ENCODE measurements at regions of chr11 and their contacts with region 1.

Region 1: DNA sequence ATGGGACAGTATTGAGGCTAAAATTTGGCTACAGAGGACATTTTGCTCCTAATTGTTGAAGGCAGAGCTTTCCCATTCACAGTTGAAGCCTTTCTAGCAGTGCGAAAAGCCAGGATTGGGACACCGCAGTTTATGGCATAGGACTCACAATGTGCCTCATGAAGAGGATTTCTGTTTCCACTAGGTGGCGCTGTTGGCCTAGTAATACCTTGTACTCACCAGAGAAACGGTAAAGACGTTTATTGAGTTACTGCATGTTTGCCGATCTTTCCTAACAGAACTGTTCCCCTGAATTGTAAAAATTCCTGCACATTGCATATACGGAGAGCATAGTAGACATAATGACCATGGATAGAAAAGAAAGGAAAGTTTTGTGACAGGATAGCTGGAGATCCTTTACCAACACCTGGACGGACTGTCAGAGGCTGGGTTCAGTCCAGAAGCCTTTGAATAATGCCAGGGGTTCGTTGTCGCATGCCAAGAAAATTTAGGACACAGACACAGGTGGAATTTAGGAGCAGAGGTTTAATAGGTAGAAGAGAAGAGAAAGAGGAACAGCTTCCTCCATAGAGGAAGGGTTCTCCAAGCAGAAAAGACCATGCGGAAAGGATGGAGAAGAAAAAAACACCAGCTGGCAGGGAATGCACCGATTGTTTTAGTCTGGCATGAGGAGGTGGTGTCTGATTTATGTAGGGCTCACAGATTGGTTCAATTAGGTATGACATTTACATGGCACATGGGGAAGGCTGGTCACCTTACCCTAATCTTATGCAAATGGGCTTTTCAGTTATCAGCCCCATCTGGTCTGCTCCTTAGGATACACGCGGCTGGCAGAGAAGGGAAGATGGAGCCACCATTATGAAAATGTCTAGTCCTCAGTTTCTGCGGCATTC is 10.8 kb upstream of the OR51D1 start:
- DNase-seq: peak; percentile 79
- ATAC-seq: peak; percentile 90
- H3K4me3 ChIP-seq: no peak overlapping the region
- H3K27ac ChIP-seq: no peak overlapping the region
- H3K4me1 ChIP-seq: no peaks in the 10 kb centered on the region
- H3K27me3 ChIP-seq: peaks cover 2% of the 10 kb centered on the region; the same call in 1 of the 2 replicates
- CTCF ChIP-seq: peak; percentile 82
- POLR2A ChIP-seq: 0 out of 2 replicates have a peak, but pooled peaks have one; percentile 21
- RAD21 ChIP-seq: peak; percentile 92

Region 2: DNA sequence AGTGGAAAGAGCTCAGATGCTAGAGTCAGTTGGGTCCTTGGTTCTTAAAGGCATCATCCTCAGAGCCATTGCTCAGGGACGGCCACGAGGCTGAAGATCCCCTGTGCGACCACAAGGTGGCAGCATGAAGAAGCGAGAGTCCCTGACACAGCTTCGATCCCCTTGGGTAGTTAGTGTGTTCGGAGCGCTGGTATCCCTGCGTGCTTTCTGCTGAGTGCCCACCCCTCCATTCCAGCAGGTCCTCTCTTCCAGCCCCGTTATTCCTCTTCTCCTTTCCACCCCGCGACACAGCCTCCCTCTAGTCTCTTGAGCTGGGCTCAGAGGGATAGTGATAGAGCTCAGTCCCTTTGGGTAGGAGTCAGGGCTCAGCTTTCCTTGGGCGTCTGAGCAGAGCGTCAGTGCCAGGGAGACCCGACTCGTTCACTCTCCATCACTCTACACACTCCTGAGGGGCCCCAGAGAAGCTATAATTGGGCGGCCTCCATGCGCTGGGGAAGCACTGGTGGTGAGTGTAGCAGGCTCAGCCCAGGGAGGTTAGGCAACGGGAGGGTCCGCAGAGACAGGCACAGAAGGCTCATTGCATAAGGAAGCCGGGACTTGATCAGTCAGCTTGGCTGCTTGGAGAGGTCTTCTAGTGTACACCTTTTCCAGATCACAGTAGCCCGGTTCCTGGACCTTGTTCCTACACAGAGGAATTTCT is 10.7 kb after region 1 on chr11 and contains the start of gene OR51D1:
- CTCF ChIA-PET with region 1: interaction called, 14 read pairs
- POLR2A ChIA-PET with region 1: no interaction called
- dilution Hi-C with region 1: no loop called
- in situ Hi-C with region 1: no loop called
- intact Hi-C with region 1: no loop called
- DNase-seq: peak; percentile 67
- ATAC-seq: peak; percentile 99
- H3K4me3 ChIP-seq: peak within 1 kb of the TSS; percentile 38
- H3K27ac ChIP-seq: no peak within 1 kb of the TSS
- H3K4me1 ChIP-seq: no peaks in the 10 kb centered on the region
- H3K27me3 ChIP-seq: peaks cover 2% of the 10 kb centered on the region; the same call in 1 of the 2 replicates
- CTCF ChIP-seq: peak; percentile 88
- POLR2A ChIP-seq: no peak
- RAD21 ChIP-seq: peak; percentile 93
- total RNA-seq, gene OR51D1: not detected in 2 replicates

Region 3: GRCh38 chr11:5118893-5119292 is 492.4 kb after region 1 on chr11:
- CTCF ChIA-PET with region 1: no interaction called
- POLR2A ChIA-PET with region 1: no interaction called
- dilution Hi-C with region 1: no loop called
- in situ Hi-C with region 1: no loop called
- intact Hi-C with region 1: loop called (anchors 1 kb)
- DNase-seq: no peak
- ATAC-seq: no peak
- H3K4me3 ChIP-seq: no peak overlapping the region
- H3K27ac ChIP-seq: no peak overlapping the region
- H3K4me1 ChIP-seq: no peaks in the 10 kb centered on the region
- H3K27me3 ChIP-seq: no peaks in the 10 kb centered on the region
- CTCF ChIP-seq: no peak
- POLR2A ChIP-seq: no peak
- RAD21 ChIP-seq: no peak

Region 4: DNA sequence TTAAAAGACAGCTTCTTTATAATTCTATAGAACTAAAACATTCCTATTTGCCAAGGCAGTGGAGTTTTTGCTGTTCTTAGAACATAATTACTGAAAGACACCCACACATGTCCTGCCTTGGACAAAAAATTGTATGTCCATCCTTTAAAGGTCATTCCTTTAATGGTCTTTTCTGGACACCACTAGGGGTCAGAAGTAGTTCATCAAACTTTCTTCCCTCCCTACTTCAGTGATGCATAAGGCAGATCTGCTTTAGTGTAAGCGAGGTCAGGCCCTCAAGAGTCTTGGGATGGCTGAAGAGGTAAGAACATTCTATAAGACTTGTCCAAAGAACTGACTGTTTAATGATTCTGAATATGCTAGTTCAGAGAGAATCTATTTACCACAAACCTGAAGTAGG is 578.3 kb after region 1 on chr11:
- CTCF ChIA-PET with region 1: no interaction called
- POLR2A ChIA-PET with region 1: no interaction called
- dilution Hi-C with region 1: no loop called
- in situ Hi-C with region 1: no loop called
- intact Hi-C with region 1: loop called (anchors 5 kb)
- DNase-seq: peak; percentile 90
- ATAC-seq: peak; percentile 94
- H3K4me3 ChIP-seq: no peak overlapping the region
- H3K27ac ChIP-seq: no peak overlapping the region
- H3K4me1 ChIP-seq: peaks cover 4% of the 10 kb centered on the region; the same call in 1 of the 2 replicates
- H3K27me3 ChIP-seq: no peaks in the 10 kb centered on the region
- CTCF ChIP-seq: peak; percentile 82
- POLR2A ChIP-seq: no peak
- RAD21 ChIP-seq: peak; percentile 91

Region 5: GRCh38 chr11:5476184-5476819 is 849.8 kb after region 1 on chr11:
- CTCF ChIA-PET with region 1: no interaction called
- POLR2A ChIA-PET with region 1: no interaction called
- dilution Hi-C with region 1: no loop called
- in situ Hi-C with region 1: no loop called
- intact Hi-C with region 1: loop called (anchors 10 kb)
- DNase-seq: peak; percentile 57
- ATAC-seq: peak; percentile 95
- H3K4me3 ChIP-seq: no peak overlapping the region
- H3K27ac ChIP-seq: no peak overlapping the region
- H3K4me1 ChIP-seq: no peaks in the 10 kb centered on the region
- H3K27me3 ChIP-seq: peaks cover 4% of the 10 kb centered on the region
- CTCF ChIP-seq: peak; percentile 75
- POLR2A ChIP-seq: no peak
- RAD21 ChIP-seq: peak; percentile 77

Region 6: GRCh38 chr11:5808500-5809121 is 1182.2 kb after region 1 on chr11 and contains the start of gene OR52N2:
- CTCF ChIA-PET with region 1: no interaction called
- POLR2A ChIA-PET with region 1: no interaction called
- dilution Hi-C with region 1: no loop called
- in situ Hi-C with region 1: no loop called
- intact Hi-C with region 1: loop called (anchors 5 kb)
- DNase-seq: peak; percentile 65
- ATAC-seq: peak; percentile 99
- H3K4me3 ChIP-seq: peak within 1 kb of the TSS; percentile 45
- H3K27ac ChIP-seq: no peak within 1 kb of the TSS
- H3K4me1 ChIP-seq: no peaks in the 10 kb centered on the region
- H3K27me3 ChIP-seq: peaks cover 7% of the 10 kb centered on the region
- CTCF ChIP-seq: peak; percentile 89
- POLR2A ChIP-seq: no peak
- RAD21 ChIP-seq: peak; percentile 95
- total RNA-seq, gene OR52N2: not detected in 2 replicates

Region 7: GRCh38 chr11:6084587-6084986 is 1458.1 kb after region 1 on chr11:
- CTCF ChIA-PET with region 1: no interaction called
- POLR2A ChIA-PET with region 1: no interaction called
- dilution Hi-C with region 1: no loop called
- in situ Hi-C with region 1: no loop called
- intact Hi-C with region 1: no loop called
- DNase-seq: no peak
- ATAC-seq: no peak
- H3K4me3 ChIP-seq: no peak overlapping the region
- H3K27ac ChIP-seq: no peak overlapping the region
- H3K4me1 ChIP-seq: no peaks in the 10 kb centered on the region
- H3K27me3 ChIP-seq: no peaks in the 10 kb centered on the region
- CTCF ChIP-seq: no peak
- POLR2A ChIP-seq: no peak
- RAD21 ChIP-seq: no peak

Measured in IMR-90 (cell line).